Left colon (tissue), 2 donors: ENCODE measurements at regions of chr5 and their contacts with region 1.

Region 1: GRCh38 chr5:178739452-178740193 is 9.2 kb upstream of the ZNF354A start:
- DNase-seq: no peak
- ATAC-seq: no peak

Region 2: GRCh38 chr5:178838695-178839685 is 99.4 kb after region 1 on chr5:
- intact Hi-C with region 1: loop called in 1 of 2 experiments (anchors 10 kb)
- DNase-seq: peak; percentile 37 to 45
- ATAC-seq: peak; percentile 59